Posterior vena cava (tissue), 2 donors: ENCODE measurements at regions of chr9 and their contacts with region 1.

Region 1: GRCh38 chr9:83247732-83248131 is 184.8 kb upstream of the RASEF start:
- DNase-seq: no peak

Region 2: GRCh38 chr9:81318549-81318948 is 1929.2 kb before region 1 on chr9:
- intact Hi-C with region 1: no loop called
- DNase-seq: no peak

Region 3: DNA sequence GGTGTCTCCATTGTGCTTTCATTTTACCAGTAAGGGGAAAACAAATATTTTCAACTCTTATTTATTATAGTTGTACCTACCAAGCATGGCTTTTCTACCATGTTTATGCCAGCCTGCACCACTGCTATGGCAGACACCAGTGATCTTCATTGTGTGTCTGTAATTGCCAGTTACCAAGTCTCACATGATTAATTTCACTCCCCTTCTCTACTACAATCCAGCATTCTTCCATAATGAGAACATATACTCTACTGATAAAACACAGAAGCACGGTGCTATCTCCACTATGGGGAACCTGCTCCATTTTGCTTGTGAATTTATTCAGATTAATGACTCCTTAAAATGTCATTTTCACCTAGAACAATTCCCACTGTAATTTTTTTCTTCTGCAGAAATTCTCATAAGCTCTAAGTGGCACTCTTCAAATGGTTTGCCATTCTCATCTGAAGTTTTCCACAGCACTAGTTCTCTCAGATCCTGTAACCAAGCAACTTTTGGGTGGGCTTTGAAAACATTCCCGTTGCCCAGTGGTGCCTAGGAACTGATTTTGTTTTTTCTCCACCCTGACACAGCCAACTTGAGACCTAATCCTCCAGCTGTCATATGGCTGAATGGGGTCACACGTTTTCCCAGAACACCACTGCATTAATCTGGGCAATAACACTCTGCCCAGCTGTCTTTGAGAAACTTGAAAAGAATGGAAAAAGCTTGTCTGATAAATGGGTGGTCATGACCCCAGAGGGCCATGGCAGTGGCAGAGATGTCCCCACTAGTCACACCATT is 37.9 kb after region 1 on chr9:
- intact Hi-C with region 1: loop called in 1 of 2 experiments (anchors 2 kb)
- DNase-seq: no peak